H1 (cell line): ENCODE measurements at regions of chr15 and their contacts with region 1.

Region 1: DNA sequence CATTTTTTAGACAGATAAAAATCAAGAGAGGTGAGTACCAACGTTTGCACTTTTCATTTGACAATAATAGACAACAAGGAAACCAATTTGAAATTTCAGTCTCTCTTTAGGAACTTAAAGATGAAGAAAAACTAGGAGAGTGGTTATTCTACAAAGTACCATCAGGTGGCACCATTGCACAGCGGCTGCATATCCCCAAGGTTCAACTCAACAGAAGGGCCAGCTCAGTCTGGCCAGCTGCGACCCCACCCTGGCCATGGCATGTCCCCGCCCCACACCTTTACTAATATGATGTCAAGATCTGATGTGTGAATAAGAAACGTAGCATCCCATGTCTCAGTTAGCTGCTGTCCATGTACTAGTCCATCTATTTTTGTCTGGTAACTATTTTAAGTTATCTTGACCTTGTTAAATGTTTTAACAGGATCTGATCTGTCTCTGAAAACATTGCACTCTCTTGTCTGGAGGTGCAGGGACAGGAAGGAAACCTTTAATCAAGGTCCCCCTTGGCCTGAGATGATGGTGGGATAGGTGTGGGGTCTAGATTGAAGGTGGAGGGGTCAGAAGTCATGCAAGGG is 35.5 kb upstream of the CGNL1 start:
- DNase-seq: no peak
- H3K4me3 ChIP-seq: no peak overlapping the region
- H3K27ac ChIP-seq: no peak overlapping the region
- H3K4me1 ChIP-seq: peaks cover 0 to 2% (median 0%) of the 10 kb centered on the region in 4 experiments; a peak in 2 of 7 replicates
- H3K27me3 ChIP-seq: no peaks in the 10 kb centered on the region
- CTCF ChIP-seq: peak; percentile 35 to 90 (median 79)
- EP300 ChIP-seq: no peak
- POLR2A ChIP-seq: no peak
- RAD21 ChIP-seq: peak; percentile 100

Region 2: GRCh38 chr15:57323806-57324589 is 16.8 kb before region 1 on chr15:
- CTCF ChIA-PET with region 1: interaction called, 60 read pairs
- POLR2A ChIA-PET with region 1: no interaction called
- DNase-seq: no peak
- H3K4me3 ChIP-seq: no peak overlapping the region
- H3K27ac ChIP-seq: no peak overlapping the region
- H3K4me1 ChIP-seq: peaks cover 2 to 13% (median 5%) of the 10 kb centered on the region in 4 experiments; a peak in 6 of 7 replicates
- H3K27me3 ChIP-seq: no peaks in the 10 kb centered on the region; a peak in 1 of 7 replicates
- CTCF ChIP-seq: no peak
- EP300 ChIP-seq: no peak
- POLR2A ChIP-seq: no peak
- RAD21 ChIP-seq: no peak

Region 3: DNA sequence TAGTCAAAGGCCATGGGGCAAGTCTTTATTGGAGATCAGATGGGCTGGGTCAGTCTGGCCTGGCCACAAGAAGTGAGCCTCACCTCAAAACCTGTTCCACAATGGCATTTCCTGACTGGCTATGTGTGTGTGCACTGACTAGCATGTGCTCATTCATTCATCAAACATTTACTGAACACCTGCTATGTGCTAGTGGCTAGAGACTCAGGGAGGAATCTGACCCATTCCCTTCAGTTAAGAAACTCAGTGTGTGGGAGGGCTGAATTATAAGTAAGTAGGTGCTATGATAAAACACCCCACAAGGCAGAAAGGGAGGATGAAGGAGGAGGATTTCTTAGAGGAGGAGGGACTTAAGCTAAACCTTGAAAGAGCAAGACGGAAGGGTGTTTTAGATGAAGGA is 30.2 kb after region 1 on chr15:
- CTCF ChIA-PET with region 1: interaction called, 33 read pairs
- POLR2A ChIA-PET with region 1: interaction called, 3 read pairs
- DNase-seq: no peak
- H3K4me3 ChIP-seq: no peak overlapping the region
- H3K27ac ChIP-seq: no peak overlapping the region
- H3K4me1 ChIP-seq: peaks cover 0 to 13% (median 10%) of the 10 kb centered on the region in 4 experiments; a peak in 5 of 7 replicates
- H3K27me3 ChIP-seq: peaks cover 0 to 5% (median 2%) of the 10 kb centered on the region in 4 experiments; a peak in 2 of 7 replicates
- CTCF ChIP-seq: no peak
- EP300 ChIP-seq: no peak
- POLR2A ChIP-seq: no peak
- RAD21 ChIP-seq: no peak

Region 4: DNA sequence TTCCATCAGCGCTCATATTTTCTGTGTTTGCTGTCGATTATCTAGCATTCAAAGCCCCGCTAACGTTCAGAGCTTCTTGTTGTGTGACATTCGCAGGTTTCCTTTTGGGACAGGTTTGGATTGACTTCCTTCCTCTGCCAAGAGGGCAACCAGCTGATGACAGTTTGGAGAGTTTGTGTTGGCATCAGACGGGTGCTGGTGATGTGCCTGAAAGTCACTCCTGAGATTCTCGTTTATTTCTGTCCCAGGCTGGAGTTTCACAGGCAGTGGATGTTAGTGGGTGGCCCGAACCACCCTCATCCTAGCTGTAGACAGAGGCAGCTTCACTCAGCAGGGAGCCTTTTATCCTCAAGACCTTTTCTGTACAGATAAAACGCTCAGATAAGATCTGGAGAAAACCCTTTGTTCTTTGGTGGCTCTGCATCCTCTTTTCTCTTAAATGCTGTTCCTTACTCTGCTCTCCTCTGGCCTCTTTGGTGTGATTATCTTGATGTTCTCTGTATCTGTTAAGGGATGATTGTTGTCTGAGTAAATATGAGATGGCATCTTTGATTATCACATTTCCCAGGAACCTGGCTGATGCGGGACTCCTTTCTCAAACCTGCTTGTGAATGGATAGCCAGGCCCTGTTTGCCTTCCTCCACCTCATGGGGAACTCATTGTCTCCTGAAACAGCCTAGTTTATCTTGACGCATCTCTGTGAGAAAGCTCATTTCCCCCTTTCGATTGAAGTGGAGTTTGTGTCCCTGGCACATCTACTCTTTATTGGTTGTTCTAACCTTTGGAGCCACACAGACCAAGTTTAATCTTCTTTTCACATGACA is 71.4 kb after region 1 on chr15:
- CTCF ChIA-PET with region 1: interaction called, 10 read pairs
- POLR2A ChIA-PET with region 1: interaction called, 3 read pairs
- DNase-seq: no peak
- H3K4me3 ChIP-seq: no peak overlapping the region
- H3K27ac ChIP-seq: no peak overlapping the region
- H3K4me1 ChIP-seq: peaks cover 0 to 6% (median 0%) of the 10 kb centered on the region in 4 experiments; a peak in 1 of 7 replicates
- H3K27me3 ChIP-seq: no peaks in the 10 kb centered on the region
- CTCF ChIP-seq: no peak
- EP300 ChIP-seq: no peak
- POLR2A ChIP-seq: no peak
- RAD21 ChIP-seq: no peak

Region 5: GRCh38 chr15:57522148-57522547 is 181.4 kb after region 1 on chr15:
- CTCF ChIA-PET with region 1: interaction called, 302 read pairs
- POLR2A ChIA-PET with region 1: interaction called, 4 read pairs
- DNase-seq: no peak
- H3K4me3 ChIP-seq: no peak overlapping the region
- H3K27ac ChIP-seq: no peak overlapping the region
- H3K4me1 ChIP-seq: peaks cover 0 to 2% (median 0%) of the 10 kb centered on the region in 4 experiments; a peak in 1 of 7 replicates
- H3K27me3 ChIP-seq: no peaks in the 10 kb centered on the region
- CTCF ChIP-seq: no peak
- EP300 ChIP-seq: no peak
- POLR2A ChIP-seq: no peak
- RAD21 ChIP-seq: no peak

Region 6: GRCh38 chr15:57541805-57542504 is 201.2 kb after region 1 on chr15:
- CTCF ChIA-PET with region 1: interaction called, 181 read pairs
- POLR2A ChIA-PET with region 1: interaction called, 3 read pairs
- DNase-seq: peak in 1 of 2 experiments; percentile 83
- H3K4me3 ChIP-seq: no peak overlapping the region
- H3K27ac ChIP-seq: no peak overlapping the region
- H3K4me1 ChIP-seq: 0 out of 7 replicates have a peak, but pooled peaks cover 0 to 1% (median 0%) of the 10 kb centered on the region in 4 experiments
- H3K27me3 ChIP-seq: no peaks in the 10 kb centered on the region
- CTCF ChIP-seq: peak; percentile 63 to 85 (median 70)
- EP300 ChIP-seq: no peak
- POLR2A ChIP-seq: no peak
- RAD21 ChIP-seq: peak; percentile 56 to 65